ENCODE measurements at regions of chr1 and their contacts with region 1.

Region 1: GRCh38 chr1:33036526-33037503 is at the start of gene AK2:
- DNase-seq: peak; percentile 91 to 99 (median 97)

Region 2: GRCh38 chr1:32769524-32770220 is 267.1 kb before region 1 on chr1:
- intact Hi-C with region 1: no loop called
- DNase-seq: peak in 36 of 42 donors; percentile 27 to 77 (median 55)

Region 3: DNA sequence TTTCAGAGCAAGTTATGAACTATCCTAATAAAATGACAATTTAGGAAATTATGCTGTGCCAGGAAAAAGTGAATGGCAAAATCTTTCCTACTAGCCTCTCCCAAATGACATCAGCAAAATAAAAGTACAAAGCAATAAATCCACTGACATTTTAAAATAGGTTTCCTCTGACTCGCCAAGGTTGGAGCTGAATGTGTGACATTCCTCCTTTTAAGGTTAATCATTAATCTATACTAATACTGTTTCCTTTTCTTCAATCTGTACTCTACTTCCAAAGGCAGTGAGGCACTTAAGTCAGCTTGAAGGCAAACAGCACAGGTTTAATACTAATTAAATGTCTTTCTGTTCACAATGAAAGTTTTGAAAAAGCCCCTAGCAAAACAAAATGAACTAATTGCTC is 87.9 kb before region 1 on chr1:
- intact Hi-C with region 1: no loop called
- DNase-seq: no peak

Region 4: DNA sequence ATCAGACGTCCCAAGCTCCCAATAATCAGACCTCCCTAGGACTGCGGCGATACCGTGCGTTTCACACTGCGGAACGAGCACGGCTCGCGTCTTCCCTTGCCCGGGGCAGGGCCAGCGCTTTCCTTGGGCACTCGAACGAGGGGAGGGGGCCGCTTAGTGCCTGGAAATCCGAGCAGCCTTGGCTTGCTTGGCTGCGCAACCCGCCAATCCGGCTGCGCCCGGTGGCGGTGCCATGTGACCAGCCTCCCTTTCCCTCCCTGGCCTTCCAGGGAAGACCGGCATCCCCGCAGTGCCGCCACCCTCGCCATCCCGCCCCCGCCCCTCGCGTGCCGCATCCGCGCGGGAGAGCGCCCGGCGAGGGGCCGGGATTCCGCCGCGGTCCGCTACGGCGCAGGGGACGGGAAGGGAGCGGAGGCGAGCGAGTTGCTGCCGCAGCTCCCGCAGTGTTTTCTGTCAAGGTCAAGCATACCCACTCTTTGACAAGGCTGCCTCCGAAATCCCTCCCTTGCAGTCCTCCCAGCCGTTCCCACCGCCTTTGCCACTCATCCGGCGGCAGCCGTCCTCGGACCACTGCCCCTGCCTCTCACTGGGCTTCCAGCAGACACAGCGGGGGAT is 63.9 kb before region 1 on chr1:
- intact Hi-C with region 1: loop called (anchors 5 kb)
- DNase-seq: peak; percentile 58 to 92 (median 78)

Region 5: GRCh38 chr1:33080885-33081553 is 44.2 kb after region 1 on chr1 and contains the start of gene AZIN2:
- intact Hi-C with region 1: loop called (anchors 10 kb)
- DNase-seq: peak; percentile 98 to 100 (median 100)

Region 6: DNA sequence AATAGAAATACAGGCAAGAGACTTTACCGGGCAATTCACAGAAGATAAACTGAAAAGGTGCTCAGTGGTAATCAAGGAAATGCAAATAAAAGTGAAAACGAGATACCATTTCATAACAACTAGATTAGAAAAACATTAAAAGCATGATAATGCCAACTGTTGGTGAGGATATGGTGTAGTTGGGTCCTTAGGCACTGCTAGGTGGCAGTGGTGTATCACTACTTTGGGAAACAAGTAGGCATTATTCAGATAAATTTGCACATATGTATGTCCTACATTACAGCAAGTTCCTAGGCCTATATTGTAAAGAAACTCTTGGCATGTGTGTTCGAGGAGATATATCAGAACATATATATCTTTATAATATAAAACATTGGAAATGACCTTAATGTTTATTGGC is 75.2 kb after region 1 on chr1:
- intact Hi-C with region 1: no loop called
- DNase-seq: no peak